SK-N-SH (cell line): ENCODE measurements at regions of chr7 and their contacts with region 1.

Region 1: DNA sequence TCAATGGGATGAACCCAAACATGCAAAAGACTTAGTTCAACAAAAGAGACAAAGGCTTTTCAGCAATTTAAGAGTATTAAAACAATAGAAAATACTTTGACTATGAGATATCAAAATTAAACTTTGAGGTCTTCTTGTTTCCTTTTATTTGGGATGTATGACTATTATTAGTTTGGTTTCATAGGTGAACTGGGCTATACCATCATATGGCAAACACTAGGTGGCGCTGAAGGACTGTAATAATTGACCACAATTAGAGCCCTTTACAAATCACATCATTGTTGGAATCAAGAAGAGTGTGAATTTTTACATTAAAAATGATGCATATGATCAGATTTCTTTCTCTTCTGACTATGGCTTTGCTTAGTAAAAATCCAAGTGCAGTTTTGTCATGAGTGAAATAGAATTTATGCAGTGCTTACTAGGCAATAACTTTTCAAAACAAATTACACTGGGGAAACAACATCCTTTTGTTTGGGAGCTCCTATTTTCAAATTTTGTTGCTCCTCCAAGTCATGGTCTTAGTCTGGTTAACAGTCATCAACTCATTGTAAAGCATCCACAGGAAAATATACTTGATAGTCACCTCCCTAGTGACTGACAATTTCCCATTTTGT is 14.7 kb upstream of the NXPH1 start:
- DNase-seq: peak; percentile 60
- H3K4me3 ChIP-seq: no peak overlapping the region; a peak in 1 of 4 replicates
- H3K27ac ChIP-seq: no peak overlapping the region
- H3K4me1 ChIP-seq: no peaks in the 10 kb centered on the region; a peak in 1 of 4 replicates
- H3K27me3 ChIP-seq: no peaks in the 10 kb centered on the region
- CTCF ChIP-seq: peak; percentile 98
- EP300 ChIP-seq: no peak
- RAD21 ChIP-seq: peak; percentile 96

Region 2: DNA sequence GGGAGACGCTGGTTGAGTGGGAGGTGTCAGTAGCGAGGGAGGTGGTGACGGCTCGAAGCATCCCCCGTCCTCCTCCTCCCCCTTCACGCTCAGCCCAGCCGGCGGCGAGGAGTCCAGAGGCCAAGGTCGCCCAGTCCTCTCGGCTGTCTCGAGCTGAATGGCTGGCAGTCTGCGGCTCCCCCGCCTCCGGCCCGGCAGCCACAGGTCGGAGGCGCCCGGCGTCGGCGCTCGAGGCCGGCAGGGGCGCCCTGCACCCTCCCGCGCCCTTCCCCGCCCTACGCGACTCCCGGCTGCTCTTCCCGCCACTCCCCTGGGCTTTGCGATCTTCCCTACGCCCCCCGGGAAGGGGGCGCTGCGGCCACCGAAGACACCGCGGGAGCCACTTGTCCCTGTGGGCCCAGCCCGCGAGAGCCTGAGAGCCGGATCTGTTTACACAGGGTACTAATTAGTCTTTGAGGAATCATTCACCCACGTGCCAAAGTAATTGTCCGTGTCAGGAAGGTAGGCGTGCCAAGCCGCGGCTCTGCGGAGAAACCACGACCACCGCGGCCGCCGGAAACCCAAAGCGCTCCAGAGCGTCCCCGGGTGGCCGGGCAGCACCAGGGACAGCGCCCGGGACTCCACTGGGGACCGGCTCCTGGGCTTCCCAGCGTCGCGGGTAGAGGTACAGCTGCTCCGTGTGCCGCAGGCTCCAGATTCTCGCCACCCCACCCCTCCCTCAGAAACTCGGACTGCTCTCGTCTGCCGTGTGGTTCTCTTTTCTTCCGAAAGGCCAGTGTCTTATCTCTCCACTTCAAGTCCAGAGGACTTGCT is 14.9 kb after region 1 on chr7 and contains the start of gene NXPH1:
- CTCF ChIA-PET with region 1: interaction called, 66 read pairs
- POLR2A ChIA-PET with region 1: no interaction called
- DNase-seq: peak; percentile 97
- H3K4me3 ChIP-seq: peak within 1 kb of the TSS; percentile 7 to 41; a peak in 2 of 4 replicates
- H3K27ac ChIP-seq: no peak within 1 kb of the TSS
- H3K4me1 ChIP-seq: peaks cover 0 to 13% of the 10 kb centered on the region in 2 experiments; a peak in 1 of 4 replicates
- H3K27me3 ChIP-seq: 0 out of 2 replicates have a peak, but pooled peaks cover 5% of the 10 kb centered on the region
- CTCF ChIP-seq: 0 out of 2 replicates have a peak, but pooled peaks have one; percentile 10
- EP300 ChIP-seq: peak in 1 of 2 experiments; percentile 15; a peak in 1 of 4 replicates
- RAD21 ChIP-seq: peak; percentile 38; the same call in 1 of the 2 replicates
- polyA plus RNA-seq, gene NXPH1: not detected in 2 replicates

Region 3: DNA sequence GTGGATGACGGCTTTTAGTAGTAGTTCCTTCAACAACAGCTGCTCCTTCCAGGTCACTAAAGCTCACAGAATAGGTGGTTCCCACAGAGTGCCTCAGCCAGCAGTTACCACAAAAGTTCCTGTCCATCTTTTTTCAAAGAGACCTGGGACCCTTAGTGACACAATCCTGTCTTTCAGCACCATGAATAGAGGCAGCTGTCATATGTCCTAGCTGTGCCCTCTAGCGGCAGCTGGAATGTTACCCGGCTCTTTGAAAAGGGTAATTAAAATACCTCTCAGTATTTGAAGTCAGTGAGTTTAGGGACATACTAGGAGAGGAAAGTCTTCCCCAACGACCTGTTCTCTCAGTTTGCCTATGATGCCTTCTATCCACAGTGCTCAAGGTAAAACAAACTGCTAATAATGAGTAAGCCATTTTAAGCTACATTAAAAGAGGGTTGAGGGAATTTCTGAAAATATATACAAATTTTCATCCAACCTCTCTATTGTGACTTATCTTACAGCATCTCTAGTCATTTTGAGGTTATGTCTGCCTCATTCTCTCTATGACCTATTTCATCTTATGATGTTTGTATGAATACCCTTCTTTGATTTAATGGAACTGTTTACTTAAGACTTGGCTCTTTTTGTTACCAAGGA is 305.5 kb after region 1 on chr7:
- CTCF ChIA-PET with region 1: interaction called, 23 read pairs
- POLR2A ChIA-PET with region 1: no interaction called
- DNase-seq: peak; percentile 59
- H3K4me3 ChIP-seq: no peak overlapping the region
- H3K27ac ChIP-seq: no peak overlapping the region
- H3K4me1 ChIP-seq: no peaks in the 10 kb centered on the region
- H3K27me3 ChIP-seq: no peaks in the 10 kb centered on the region
- CTCF ChIP-seq: peak; percentile 44
- EP300 ChIP-seq: no peak
- RAD21 ChIP-seq: peak; percentile 77

Region 4: DNA sequence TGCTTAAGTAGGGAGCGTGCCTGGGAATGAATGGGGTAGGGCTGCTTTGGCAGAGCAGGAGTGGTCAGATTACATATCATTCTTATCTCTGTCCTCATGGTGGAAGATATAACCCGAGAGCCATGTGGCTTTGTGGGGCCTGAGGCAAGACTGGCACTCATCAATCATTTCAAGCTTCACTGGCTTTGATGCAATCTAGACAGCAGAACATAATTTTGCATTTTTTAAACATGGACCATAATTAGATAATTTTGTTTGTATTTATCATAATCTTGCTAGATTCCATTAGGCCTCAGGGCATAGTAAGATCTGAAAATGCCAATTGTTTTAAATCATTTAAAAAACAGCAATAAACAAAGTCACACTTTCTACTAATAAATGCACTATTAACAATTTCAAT is 494.9 kb after region 1 on chr7:
- CTCF ChIA-PET with region 1: interaction called, 10 read pairs
- POLR2A ChIA-PET with region 1: no interaction called
- DNase-seq: peak; percentile 80
- H3K4me3 ChIP-seq: no peak overlapping the region
- H3K27ac ChIP-seq: no peak overlapping the region
- H3K4me1 ChIP-seq: peaks cover 0 to 11% of the 10 kb centered on the region in 2 experiments; a peak in 2 of 4 replicates
- H3K27me3 ChIP-seq: no peaks in the 10 kb centered on the region
- CTCF ChIP-seq: no peak
- EP300 ChIP-seq: peak; percentile 32 to 100; a peak in 3 of 4 replicates
- RAD21 ChIP-seq: peak; percentile 43

Region 5: DNA sequence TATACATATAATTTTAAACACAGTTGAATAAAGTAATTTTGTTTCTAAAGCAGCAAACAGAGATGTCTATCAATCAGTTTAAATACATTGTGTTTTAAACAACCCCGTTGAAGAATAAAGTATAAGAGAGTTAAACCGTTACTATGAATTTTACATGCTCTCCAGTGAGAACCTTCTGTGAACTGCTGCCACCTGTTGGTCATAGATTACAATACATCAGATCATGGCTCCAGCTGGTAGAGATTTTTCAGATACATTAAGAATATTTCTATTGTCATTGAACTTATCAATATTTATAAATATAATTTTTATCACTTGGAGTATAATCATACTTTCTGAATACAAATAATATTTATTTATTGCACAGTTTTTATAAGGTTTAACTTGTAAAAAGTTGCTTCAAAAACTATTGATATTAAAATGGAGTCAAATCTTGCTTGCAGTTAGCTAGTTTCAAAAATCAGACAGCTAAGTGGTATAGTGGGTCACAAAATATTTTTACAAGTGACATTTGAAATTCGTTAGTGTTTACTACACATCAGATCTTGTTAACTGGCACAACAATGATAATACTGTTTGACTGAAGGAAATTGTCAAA is 1993.8 kb after region 1 on chr7:
- CTCF ChIA-PET with region 1: interaction called, 25 read pairs
- POLR2A ChIA-PET with region 1: no interaction called
- DNase-seq: peak; percentile 44
- H3K4me3 ChIP-seq: no peak overlapping the region
- H3K27ac ChIP-seq: no peak overlapping the region
- H3K4me1 ChIP-seq: no peaks in the 10 kb centered on the region
- H3K27me3 ChIP-seq: no peaks in the 10 kb centered on the region
- CTCF ChIP-seq: peak; percentile 64
- EP300 ChIP-seq: no peak
- RAD21 ChIP-seq: peak; percentile 91